PC-3 (cell line): ENCODE measurements at regions of chr5 and their contacts with region 1.

Region 1: DNA sequence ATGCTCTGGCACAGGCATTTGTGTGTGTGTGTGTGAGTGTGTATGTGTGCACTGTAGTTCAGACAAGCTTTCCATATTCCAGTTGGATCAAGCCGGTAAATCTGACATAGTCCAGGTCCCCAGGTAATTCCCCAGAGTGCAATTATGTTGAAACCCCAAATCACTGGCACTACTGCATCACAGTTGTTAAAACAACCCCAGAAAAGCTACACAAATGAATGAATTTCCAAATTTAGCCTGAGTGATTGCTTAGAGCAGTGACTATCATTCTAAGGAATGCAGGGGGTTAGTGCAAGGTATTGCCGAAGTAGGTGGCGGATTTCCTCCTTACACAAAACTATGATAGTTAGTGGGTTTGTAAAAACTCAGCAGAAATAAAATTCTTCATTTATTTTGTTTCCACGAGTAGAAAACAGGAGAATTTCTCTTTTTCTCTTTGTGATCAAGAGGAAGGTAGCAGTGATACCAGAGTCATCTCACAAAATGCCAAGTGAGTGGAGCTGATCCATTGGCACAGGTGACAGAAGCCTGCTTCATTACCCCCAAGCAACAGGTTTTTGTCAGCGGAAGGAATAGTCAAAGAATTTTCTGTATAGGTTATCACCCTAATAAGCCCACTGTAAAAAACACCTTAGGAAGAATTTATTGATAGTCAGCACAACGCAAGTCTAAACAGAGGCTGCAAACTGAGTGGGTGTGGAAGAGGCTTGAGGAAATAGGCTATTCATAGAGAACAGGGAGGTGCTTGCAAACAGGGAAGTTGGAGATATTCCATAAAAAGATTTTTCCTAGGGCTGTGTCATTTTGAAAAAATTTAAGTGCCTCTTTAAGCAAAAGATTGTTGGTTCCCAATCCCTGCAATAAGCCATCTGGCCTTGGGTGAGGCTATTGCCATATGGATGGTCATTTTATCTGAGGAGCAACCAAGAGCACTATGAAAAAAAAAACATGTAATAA is 385.1 kb downstream of the CHSY3 start:
- DNase-seq: peak; percentile 80
- ATAC-seq: peak; percentile 94
- H3K4me3 ChIP-seq: peak overlapping the region; percentile 52
- H3K27ac ChIP-seq: peak overlapping the region; percentile 61
- H3K4me1 ChIP-seq: peaks cover 17% of the 10 kb centered on the region
- H3K27me3 ChIP-seq: no peaks in the 10 kb centered on the region
- CTCF ChIP-seq: no peak

Region 2: DNA sequence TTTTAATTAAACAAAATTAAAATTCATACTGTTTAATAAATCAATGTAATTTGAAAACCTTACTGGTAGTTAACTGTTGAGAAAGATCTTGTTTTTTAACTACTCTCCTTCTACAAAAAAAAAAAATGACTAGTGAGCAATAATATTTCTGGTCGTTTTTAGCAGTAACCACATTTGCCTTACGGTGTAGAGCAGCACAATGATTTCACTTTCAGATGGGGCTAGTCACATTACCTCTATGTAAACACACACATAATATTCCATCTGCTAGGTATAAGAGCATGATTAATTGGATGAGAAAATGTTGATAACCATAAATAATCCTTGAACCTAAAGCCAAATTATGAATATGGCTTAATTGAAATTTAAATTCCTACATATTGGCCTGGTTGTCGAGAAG is 187.0 kb before region 1 on chr5:
- CTCF ChIA-PET with region 1: no interaction called
- POLR2A ChIA-PET with region 1: no interaction called
- intact Hi-C with region 1: no loop called
- DNase-seq: no peak
- ATAC-seq: no peak
- H3K4me3 ChIP-seq: no peak overlapping the region
- H3K27ac ChIP-seq: no peak overlapping the region
- H3K4me1 ChIP-seq: no peaks in the 10 kb centered on the region
- H3K27me3 ChIP-seq: no peaks in the 10 kb centered on the region
- CTCF ChIP-seq: no peak

Region 3: DNA sequence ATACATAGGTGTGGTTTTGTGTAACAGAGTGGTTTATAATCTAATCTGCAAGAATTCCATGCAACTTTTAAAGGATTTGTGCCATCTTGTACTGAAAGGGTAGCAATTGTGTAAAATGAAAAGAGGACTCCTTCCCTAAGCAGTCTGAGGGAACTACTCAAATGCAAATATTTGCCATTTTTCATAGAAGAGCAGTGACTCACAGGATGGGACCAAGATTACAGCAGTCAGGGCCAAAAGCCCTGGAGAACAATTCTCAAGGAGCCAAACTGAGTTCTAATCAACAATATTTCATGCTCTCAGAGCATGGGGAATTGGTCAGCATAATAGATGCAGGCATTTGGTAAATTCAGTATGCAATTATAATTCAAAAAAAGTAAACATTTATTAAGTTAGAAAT is 110.7 kb after region 1 on chr5:
- CTCF ChIA-PET with region 1: no interaction called
- POLR2A ChIA-PET with region 1: no interaction called
- intact Hi-C with region 1: loop called (anchors 5 kb)
- DNase-seq: peak; percentile 88
- ATAC-seq: peak; percentile 100
- H3K4me3 ChIP-seq: no peak overlapping the region
- H3K27ac ChIP-seq: peak overlapping the region; percentile 83
- H3K4me1 ChIP-seq: peaks cover 15% of the 10 kb centered on the region
- H3K27me3 ChIP-seq: no peaks in the 10 kb centered on the region
- CTCF ChIP-seq: no peak